Heart right ventricle (tissue), 16 donors: ENCODE measurements at regions of chr18 and their contacts with region 1.

Region 1: DNA sequence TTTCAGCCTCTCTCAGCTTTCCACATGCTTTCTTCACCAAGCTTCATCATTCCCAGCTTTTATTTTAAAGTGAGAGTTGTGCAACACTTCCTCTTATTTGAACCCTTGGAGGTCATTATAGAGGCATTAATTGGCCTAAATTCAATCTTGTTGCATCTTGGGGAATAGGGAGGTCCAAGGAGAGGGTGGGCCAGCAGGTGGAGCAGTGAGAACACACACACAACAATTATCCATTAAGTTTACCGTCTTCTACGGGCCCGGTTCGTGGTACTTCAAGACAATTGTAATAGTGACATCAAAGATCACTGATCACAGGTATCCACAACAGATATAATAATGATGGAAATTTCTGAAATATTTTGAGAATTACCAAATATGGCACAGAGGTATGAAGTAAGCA is 457.2 kb upstream of the SMIM21 start:
- DNase-seq: peak in 1 of 2 donors; percentile 8
- ATAC-seq: peak in 1 of 8 donors; percentile 50
- H3K4me3 ChIP-seq: no peak overlapping the region
- H3K27ac ChIP-seq: no peak overlapping the region
- H3K4me1 ChIP-seq: no peaks in the 10 kb centered on the region
- H3K27me3 ChIP-seq: no peaks in the 10 kb centered on the region
- CTCF ChIP-seq: peak in 8 of 9 donors; percentile 9 to 58 (median 42)

Region 2: DNA sequence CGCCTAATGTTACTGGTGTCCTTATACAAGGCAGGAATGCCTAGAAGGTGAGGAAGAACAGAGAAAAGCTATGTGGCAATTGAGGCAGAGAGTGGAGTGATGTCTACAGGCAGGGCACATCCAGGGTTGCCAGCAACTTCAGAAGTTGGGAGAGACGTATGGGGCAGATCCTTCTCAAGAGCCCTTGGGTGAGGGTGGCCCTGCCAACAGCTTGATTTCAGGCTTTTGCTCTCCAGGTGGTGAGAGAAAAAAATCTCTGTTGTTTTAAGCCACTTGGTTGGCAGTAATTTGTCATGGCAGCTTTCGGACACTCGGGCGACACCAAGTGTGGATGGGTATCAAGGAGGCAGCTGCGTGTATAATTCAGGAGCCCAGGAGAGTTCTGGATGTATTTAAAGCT is 239.9 kb before region 1 on chr18:
- intact Hi-C with region 1: no loop called
- DNase-seq: no peak
- ATAC-seq: peak in 1 of 8 donors; percentile 38
- H3K4me3 ChIP-seq: no peak overlapping the region
- H3K27ac ChIP-seq: no peak overlapping the region
- H3K4me1 ChIP-seq: peaks cover 0 to under 1% (median 0%) of the 10 kb centered on the region in 9 donors
- H3K27me3 ChIP-seq: no peaks in the 10 kb centered on the region
- CTCF ChIP-seq: no peak

Region 3: GRCh38 chr18:76126327-76126726 is 241.6 kb after region 1 on chr18:
- intact Hi-C with region 1: loop called in 5 of 10 experiments (anchors 2 to 10 kb)
- DNase-seq: peak in 1 of 2 donors; percentile 10
- ATAC-seq: peak; percentile 52 to 85 (median 68)
- H3K4me3 ChIP-seq: no peak overlapping the region
- H3K27ac ChIP-seq: no peak overlapping the region
- H3K4me1 ChIP-seq: no peaks in the 10 kb centered on the region
- H3K27me3 ChIP-seq: peaks cover 0 to 3% (median 0%) of the 10 kb centered on the region in 7 donors
- CTCF ChIP-seq: peak in 7 of 9 donors; percentile 20 to 52 (median 28)

Region 4: DNA sequence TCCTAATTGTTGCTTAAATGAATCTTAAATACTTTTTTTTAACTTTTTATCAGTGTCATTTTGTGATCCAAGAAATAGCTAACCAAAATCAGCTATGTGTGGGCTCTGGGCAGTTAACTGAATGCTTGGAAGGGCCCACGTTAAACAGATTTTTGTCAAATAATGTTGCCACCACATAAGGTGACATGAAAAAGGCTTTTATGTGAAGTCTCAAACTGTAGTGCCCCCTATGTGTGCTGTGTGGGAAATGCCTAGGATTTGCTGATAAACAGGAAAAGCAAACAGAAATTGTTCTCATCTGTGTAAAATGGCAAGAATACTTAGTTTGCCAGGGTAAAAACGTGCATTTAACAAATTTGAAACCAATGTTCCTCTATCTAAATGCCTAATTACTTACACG is 368.2 kb after region 1 on chr18:
- intact Hi-C with region 1: loop called in 7 of 10 experiments (anchors 5 to 10 kb)
- DNase-seq: no peak
- ATAC-seq: no peak
- H3K4me3 ChIP-seq: no peak overlapping the region
- H3K27ac ChIP-seq: no peak overlapping the region
- H3K4me1 ChIP-seq: peaks cover 0 to 3% (median 0%) of the 10 kb centered on the region in 9 donors
- H3K27me3 ChIP-seq: peaks cover 0 to 20% (median 5%) of the 10 kb centered on the region in 7 donors
- CTCF ChIP-seq: peak in 7 of 9 donors; percentile 14 to 45 (median 41)

Region 5: DNA sequence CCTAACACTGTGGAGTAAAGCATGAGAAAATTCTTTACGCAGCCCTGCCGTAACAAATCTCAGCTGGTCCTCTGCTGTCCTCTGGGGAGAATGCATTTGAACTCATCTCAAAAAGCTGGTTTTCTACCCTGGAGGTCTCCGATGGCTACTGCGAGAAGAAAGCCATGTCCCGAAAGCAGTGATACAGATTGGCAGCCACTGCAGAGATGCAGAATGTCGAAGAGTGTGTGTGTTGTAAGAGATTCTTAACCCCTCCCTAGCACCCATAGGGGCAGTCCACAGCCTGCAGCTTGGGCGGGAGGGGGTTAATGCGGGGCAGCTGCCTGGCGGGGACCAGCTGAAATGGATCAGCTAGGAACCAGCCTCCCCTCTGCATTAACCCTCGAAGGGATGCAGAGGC is 374.4 kb after region 1 on chr18:
- intact Hi-C with region 1: loop called in 7 of 10 experiments (anchors 5 to 10 kb)
- DNase-seq: no peak
- ATAC-seq: peak in 2 of 8 donors; percentile 16 to 47
- H3K4me3 ChIP-seq: peak overlapping the region in 1 of 10 donors; percentile 3
- H3K27ac ChIP-seq: no peak overlapping the region
- H3K4me1 ChIP-seq: peaks cover 0 to 3% (median 0%) of the 10 kb centered on the region in 9 donors
- H3K27me3 ChIP-seq: peaks cover 0 to 22% (median 5%) of the 10 kb centered on the region in 7 donors
- CTCF ChIP-seq: no peak